Left ventricle myocardium inferior (tissue), 1 donor: ENCODE measurements at regions of chrX and their contacts with region 1.

Region 1: GRCh38 chrX:153460845-153461244 is 9.5 kb downstream of the HAUS7 start:
- DNase-seq: no peak
- H3K4me3 ChIP-seq: no peak overlapping the region
- H3K27ac ChIP-seq: no peak overlapping the region
- H3K4me1 ChIP-seq: peaks cover 14% of the 10 kb centered on the region
- H3K27me3 ChIP-seq: no peaks in the 10 kb centered on the region
- CTCF ChIP-seq: peak; percentile 66

Region 2: DNA sequence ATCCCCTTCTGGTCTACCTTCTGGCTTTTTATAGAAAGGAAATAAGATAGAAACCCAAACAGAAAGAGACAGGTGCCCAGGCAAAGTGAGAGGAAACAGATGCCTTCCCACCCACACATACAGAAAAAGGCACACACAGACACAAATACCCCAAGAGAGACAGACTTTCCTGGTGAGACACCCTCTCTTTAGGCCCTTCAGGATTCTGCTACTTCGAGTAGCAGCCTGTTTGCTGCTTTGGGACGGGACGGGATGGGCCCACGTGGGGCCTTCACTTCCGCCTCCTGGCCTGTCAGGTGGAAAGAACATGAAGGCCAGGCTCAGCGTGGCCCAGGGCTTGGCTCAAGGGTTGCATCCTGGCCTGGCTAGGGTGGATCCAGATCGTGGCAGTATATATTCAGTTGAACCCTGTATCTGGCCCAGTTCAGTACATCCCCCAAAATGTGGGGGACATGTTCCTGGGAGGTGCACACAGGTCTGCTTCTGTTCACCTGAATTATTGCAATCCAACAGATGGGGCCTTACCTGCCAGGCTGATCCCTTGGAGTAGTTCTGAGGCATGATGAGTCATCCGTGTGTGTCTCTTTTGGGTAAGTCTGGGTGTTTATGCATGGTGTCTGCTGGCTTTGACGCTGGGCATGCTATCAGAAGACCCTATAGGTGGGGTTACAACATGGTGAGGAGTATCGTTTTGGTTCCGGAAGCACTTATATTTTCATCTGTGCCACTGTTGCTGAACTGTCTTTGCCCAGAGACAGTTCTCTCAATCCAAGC is 124.5 kb before region 1 on chrX:
- intact Hi-C with region 1: no loop called
- DNase-seq: no peak
- H3K4me3 ChIP-seq: no peak overlapping the region
- H3K27ac ChIP-seq: no peak overlapping the region
- H3K4me1 ChIP-seq: peaks cover 4% of the 10 kb centered on the region
- H3K27me3 ChIP-seq: no peaks in the 10 kb centered on the region
- CTCF ChIP-seq: no peak

Region 3: GRCh38 chrX:153353416-153353815 is 107.4 kb before region 1 on chrX:
- intact Hi-C with region 1: no loop called
- DNase-seq: no peak
- H3K4me3 ChIP-seq: no peak overlapping the region
- H3K27ac ChIP-seq: no peak overlapping the region
- H3K4me1 ChIP-seq: no peaks in the 10 kb centered on the region
- H3K27me3 ChIP-seq: no peaks in the 10 kb centered on the region
- CTCF ChIP-seq: no peak

Region 4: GRCh38 chrX:153507484-153508178 is 46.8 kb after region 1 on chrX:
- intact Hi-C with region 1: loop called (anchors 5 kb)
- DNase-seq: peak; percentile 81
- H3K4me3 ChIP-seq: no peak overlapping the region
- H3K27ac ChIP-seq: no peak overlapping the region
- H3K4me1 ChIP-seq: no peaks in the 10 kb centered on the region
- H3K27me3 ChIP-seq: no peaks in the 10 kb centered on the region
- CTCF ChIP-seq: peak; percentile 83

Region 5: DNA sequence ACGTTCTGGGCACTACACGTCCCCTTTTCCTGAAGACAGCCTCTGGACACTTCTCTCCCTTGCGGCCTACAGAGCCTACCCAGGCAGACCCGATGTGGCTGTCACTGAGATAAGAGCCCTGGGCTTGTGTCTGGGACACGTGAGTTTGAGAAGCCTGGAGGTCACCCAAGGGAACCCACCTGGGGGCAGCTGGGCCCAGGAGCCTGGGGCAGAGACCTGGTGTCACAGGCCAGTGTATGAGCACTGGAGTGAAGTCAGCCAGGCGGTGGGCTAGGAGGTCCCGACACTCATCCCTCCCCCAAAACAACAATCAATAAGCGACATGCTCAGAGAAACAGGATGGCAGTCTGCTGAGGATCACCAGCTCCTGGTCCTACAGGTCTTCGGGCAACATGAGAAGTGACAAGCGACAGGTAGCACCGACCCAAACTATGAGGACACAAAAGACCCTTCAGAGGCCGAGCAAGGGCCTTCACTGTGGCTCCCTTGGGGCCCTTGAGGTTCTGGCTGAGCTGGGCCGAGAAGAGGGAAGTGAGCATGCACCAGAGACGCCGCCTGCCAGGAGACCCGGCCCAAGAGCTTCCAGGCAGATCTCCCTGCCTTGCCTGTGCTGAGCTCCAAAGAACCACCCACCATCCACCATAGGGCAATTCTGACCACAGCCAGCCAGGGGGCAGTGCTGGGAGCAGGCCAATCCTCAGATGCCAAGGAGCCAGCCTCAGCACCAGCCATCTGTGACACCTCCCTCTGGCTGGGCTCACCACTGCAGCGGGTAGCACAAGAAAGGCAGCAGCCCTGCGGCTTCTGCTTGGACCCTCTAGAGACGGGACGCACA is 175.2 kb after region 1 on chrX:
- intact Hi-C with region 1: no loop called
- DNase-seq: no peak
- H3K4me3 ChIP-seq: no peak overlapping the region
- H3K27ac ChIP-seq: no peak overlapping the region
- H3K4me1 ChIP-seq: no peaks in the 10 kb centered on the region
- H3K27me3 ChIP-seq: peaks cover 21% of the 10 kb centered on the region
- CTCF ChIP-seq: peak; percentile 25

Region 6: DNA sequence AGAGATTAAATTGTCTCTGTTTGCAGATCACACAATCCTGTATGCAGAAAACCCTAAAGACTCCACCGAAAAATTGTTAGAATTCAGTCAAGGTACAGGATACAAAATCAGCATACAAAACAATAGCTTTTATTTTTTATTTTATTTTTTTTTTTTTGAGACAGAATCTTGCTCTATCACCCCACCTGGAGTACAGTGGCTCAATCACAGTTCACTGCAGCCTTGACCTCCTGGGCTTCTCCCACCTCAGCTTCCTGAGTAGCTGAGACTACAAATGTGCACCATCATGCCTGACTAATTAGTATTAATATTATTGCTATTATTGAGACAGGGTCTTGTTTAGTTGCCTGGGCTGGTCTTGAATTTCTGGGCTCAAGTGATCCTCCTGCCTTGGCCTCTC is 294.3 kb after region 1 on chrX:
- intact Hi-C with region 1: no loop called
- DNase-seq: no peak
- H3K4me3 ChIP-seq: no peak overlapping the region
- H3K27ac ChIP-seq: no peak overlapping the region
- H3K4me1 ChIP-seq: no peaks in the 10 kb centered on the region
- H3K27me3 ChIP-seq: no peaks in the 10 kb centered on the region
- CTCF ChIP-seq: no peak